ENCODE measurements at regions of chr1 and their contacts with region 1.

Region 1: GRCh38 chr1:58652651-58653184 is 47.1 kb downstream of the MYSM1 start:
- DNase-seq: peak; percentile 32
- ATAC-seq: peak; percentile 69
- H3K4me3 Mint-ChIP-seq: no peak overlapping the region
- H3K27ac Mint-ChIP-seq: no peak overlapping the region
- H3K4me1 Mint-ChIP-seq: peaks cover 10% of the 10 kb centered on the region
- H3K27me3 Mint-ChIP-seq: no peaks in the 10 kb centered on the region
- CTCF ChIP-seq: peak; percentile 54; the same call in 1 of the 2 replicates

Region 2: GRCh38 chr1:58546520-58547308 is 106.0 kb before region 1 on chr1 and contains the start of gene OMA1:
- CTCF ChIA-PET with region 1: interaction called, 18 read pairs
- POLR2A ChIA-PET with region 1: no interaction called
- DNase-seq: peak; percentile 98
- ATAC-seq: peak; percentile 98
- H3K4me3 Mint-ChIP-seq: peak within 1 kb of the TSS; percentile 90
- H3K27ac Mint-ChIP-seq: peak within 1 kb of the TSS; percentile 96
- H3K4me1 Mint-ChIP-seq: peaks cover 22% of the 10 kb centered on the region
- H3K27me3 Mint-ChIP-seq: peaks cover 2% of the 10 kb centered on the region; the same call in 1 of the 2 replicates
- CTCF ChIP-seq: peak; percentile 90
- total RNA-seq, gene OMA1: 10.5 to 13.1 TPM (median 11.7 TPM) in 3 replicates

Region 3: GRCh38 chr1:58688931-58689566 is 36.3 kb after region 1 on chr1:
- CTCF ChIA-PET with region 1: no interaction called
- POLR2A ChIA-PET with region 1: no interaction called
- DNase-seq: no peak
- ATAC-seq: peak; percentile 50
- H3K4me3 Mint-ChIP-seq: no peak overlapping the region
- H3K27ac Mint-ChIP-seq: peak overlapping the region; percentile 40; the same call in 1 of the 2 replicates
- H3K4me1 Mint-ChIP-seq: peaks cover 36% of the 10 kb centered on the region
- H3K27me3 Mint-ChIP-seq: no peaks in the 10 kb centered on the region
- CTCF ChIP-seq: no peak

Region 4: GRCh38 chr1:58773406-58773840 is 120.7 kb after region 1 on chr1:
- CTCF ChIA-PET with region 1: no interaction called
- POLR2A ChIA-PET with region 1: no interaction called
- DNase-seq: no peak
- ATAC-seq: peak; percentile 53
- H3K4me3 Mint-ChIP-seq: no peak overlapping the region
- H3K27ac Mint-ChIP-seq: no peak overlapping the region
- H3K4me1 Mint-ChIP-seq: peaks cover 12% of the 10 kb centered on the region
- H3K27me3 Mint-ChIP-seq: no peaks in the 10 kb centered on the region; the same call in 1 of the 2 replicates
- CTCF ChIP-seq: no peak

Measured in WTC11 (cell line).